Activated CD4-positive, alpha-beta memory T cell treated with anti-CD3 and anti-CD28 coated beads for 36 hours (primary cell): ENCODE measurements at regions of chr9 and their contacts with region 1.

Region 1: DNA sequence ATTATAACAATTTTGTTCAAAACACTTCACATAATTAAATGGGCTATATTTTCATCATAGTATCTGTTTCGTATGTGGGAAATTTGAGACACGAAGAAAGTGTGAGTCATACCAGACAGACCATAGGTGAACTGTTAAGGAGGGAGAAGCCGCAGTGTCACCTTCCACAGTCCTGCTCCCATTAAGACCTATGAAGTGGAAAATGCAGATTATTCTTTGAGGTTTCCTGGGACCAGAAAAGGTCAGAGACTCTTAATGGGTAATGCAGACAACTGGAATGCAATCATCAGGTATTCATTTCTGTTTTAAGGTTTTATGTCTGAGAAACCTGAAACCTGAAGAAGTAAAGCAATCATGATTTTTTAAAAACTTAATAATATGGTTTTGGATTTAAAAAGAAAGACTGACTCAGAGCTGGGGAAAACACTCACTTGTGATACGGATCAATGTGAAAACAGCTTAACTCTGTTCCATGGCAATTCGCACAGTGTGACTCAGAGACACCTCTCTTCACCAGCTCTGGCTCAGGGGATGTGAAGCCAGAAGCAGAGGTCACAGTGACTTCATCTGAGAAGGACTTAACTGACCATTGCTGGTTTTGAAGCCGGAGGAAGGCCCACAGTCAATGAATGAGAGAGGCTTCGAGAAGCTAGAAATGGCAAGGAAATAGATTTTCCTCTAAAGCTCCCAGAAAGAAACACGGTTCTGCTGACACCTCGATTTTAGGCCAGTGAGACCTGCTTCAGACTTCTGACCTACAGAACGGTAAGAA is 17.2 kb upstream of the GCNT1 start:
- DNase-seq: peak; percentile 72
- H3K4me3 Mint-ChIP-seq: peak overlapping the region; percentile 77
- H3K27ac Mint-ChIP-seq: peak overlapping the region; percentile 97
- H3K4me1 Mint-ChIP-seq: peaks cover 50% of the 10 kb centered on the region
- H3K27me3 Mint-ChIP-seq: peaks cover 1% of the 10 kb centered on the region

Region 2: GRCh38 chr9:75909776-75910175 is 532.0 kb before region 1 on chr9:
- CTCF ChIA-PET with region 1: no interaction called
- POLR2A ChIA-PET with region 1: no interaction called
- intact Hi-C with region 1: loop called (anchors 10 kb)
- DNase-seq: peak; percentile 12
- H3K4me3 Mint-ChIP-seq: no peak overlapping the region
- H3K27ac Mint-ChIP-seq: no peak overlapping the region
- H3K4me1 Mint-ChIP-seq: peaks cover 16% of the 10 kb centered on the region
- H3K27me3 Mint-ChIP-seq: no peaks in the 10 kb centered on the region

Region 3: GRCh38 chr9:76458903-76459690 is 17.4 kb after region 1 on chr9 and contains the start of gene GCNT1:
- CTCF ChIA-PET with region 1: interaction called, 3 read pairs
- POLR2A ChIA-PET with region 1: interaction called, 5 read pairs
- intact Hi-C with region 1: loop called (anchors 2 kb)
- DNase-seq: peak; percentile 94
- H3K4me3 Mint-ChIP-seq: peak within 1 kb of the TSS; percentile 94
- H3K27ac Mint-ChIP-seq: peak within 1 kb of the TSS; percentile 49
- H3K4me1 Mint-ChIP-seq: peaks cover 18% of the 10 kb centered on the region
- H3K27me3 Mint-ChIP-seq: no peaks in the 10 kb centered on the region
- total RNA-seq, gene GCNT1: 6.7 to 6.9 TPM

Region 4: DNA sequence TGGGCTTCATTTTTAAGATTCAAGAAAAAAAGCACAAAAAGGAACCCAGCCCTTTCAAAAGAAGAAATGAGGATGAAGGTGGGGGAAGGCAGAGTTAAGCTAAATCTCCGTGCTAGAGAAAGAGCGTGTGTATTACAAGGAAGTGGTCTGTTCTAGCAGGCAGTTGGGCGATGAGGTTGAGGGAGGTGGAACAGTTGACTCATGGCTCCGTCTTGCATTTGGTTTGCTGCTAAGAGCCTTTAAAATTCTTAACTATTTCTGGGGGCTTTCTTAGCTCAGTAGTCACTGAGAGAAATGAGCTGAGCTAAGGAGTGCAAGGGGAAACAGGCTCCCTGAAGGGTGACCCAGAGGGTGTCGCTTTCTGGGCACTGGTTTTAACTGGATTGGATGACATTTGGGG is 134.6 kb after region 1 on chr9:
- CTCF ChIA-PET with region 1: no interaction called
- POLR2A ChIA-PET with region 1: interaction called, 3 read pairs
- intact Hi-C with region 1: loop called (anchors 5 kb)
- DNase-seq: peak; percentile 84
- H3K4me3 Mint-ChIP-seq: no peak overlapping the region
- H3K27ac Mint-ChIP-seq: peak overlapping the region; percentile 46
- H3K4me1 Mint-ChIP-seq: peaks cover 19% of the 10 kb centered on the region
- H3K27me3 Mint-ChIP-seq: peaks cover 30% of the 10 kb centered on the region

Region 5: GRCh38 chr9:76704593-76705204 is 263.0 kb after region 1 on chr9:
- CTCF ChIA-PET with region 1: interaction called, 50 read pairs
- POLR2A ChIA-PET with region 1: no interaction called
- intact Hi-C with region 1: no loop called
- DNase-seq: no peak
- H3K4me3 Mint-ChIP-seq: no peak overlapping the region
- H3K27ac Mint-ChIP-seq: no peak overlapping the region
- H3K4me1 Mint-ChIP-seq: peaks cover 10% of the 10 kb centered on the region
- H3K27me3 Mint-ChIP-seq: peaks cover 36% of the 10 kb centered on the region